CD8-positive, alpha-beta T cell (primary cell): ENCODE measurements at regions of chr22 and their contacts with region 1.

Region 1: GRCh38 chr22:31211862-31212730 is at the start of gene LIMK2:
- DNase-seq: peak; percentile 93 to 99 (median 97)
- ATAC-seq: peak; percentile 99
- H3K4me3 ChIP-seq: peak within 1 kb of the TSS; percentile 87 to 99
- H3K4me3 Mint-ChIP-seq: peak within 1 kb of the TSS; percentile 88
- H3K27ac ChIP-seq: peak within 1 kb of the TSS; percentile 50 to 80
- H3K27ac Mint-ChIP-seq: peak within 1 kb of the TSS; percentile 92
- H3K4me1 ChIP-seq: peaks cover 30% of the 10 kb centered on the region
- H3K4me1 Mint-ChIP-seq: peaks cover 45% of the 10 kb centered on the region
- H3K27me3 ChIP-seq: no peaks in the 10 kb centered on the region
- H3K27me3 Mint-ChIP-seq: no peaks in the 10 kb centered on the region
- CTCF ChIP-seq: peak; percentile 72
- total RNA-seq, gene LIMK2: 8.4 to 9.1 TPM

Region 2: DNA sequence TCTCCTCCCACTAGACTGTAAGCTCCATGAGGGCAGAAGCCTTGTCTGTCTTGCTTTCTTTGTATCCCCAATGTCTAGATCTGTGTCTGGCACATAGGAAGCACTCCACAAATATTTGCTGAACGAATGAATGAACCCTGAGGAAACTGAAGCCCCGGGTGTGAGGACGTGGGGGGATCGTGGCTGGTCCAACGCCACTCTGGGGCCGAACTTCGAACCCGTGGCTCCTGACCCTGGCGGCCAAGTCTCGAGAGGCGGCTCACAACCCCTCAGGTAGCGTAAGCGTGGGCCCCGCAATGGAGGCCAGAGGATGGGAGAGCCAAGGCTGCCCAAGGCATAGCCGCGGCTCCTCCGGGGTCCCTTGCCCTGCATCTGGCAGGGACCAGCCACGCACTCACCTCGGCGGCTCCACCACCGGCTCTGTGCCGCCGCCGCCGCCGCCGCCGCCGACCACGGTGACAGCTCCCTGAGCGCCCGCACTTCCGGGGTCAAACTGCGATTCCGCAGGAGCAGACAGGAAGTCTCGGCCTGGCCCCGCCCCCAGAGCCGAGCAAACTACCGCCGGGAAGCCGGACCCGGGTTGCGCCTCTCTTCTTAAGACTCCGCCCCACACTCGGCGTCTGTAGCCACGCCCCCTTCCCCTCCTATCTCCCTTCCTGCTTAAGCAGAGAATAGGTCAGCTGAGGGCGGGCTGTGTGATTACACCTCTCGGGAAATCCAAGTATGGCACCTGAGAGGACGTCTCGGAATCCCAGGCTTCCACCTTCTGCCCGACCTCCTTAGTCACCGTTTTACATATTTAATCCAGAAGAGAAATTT is 1374.1 kb before region 1 on chr22 and contains the start of gene ASCC2:
- CTCF ChIA-PET with region 1: no interaction called
- POLR2A ChIA-PET with region 1: no interaction called
- intact Hi-C with region 1: loop called in 1 of 2 experiments (anchors 10 kb)
- DNase-seq: peak; percentile 97 to 100 (median 99)
- ATAC-seq: peak; percentile 98
- H3K4me3 ChIP-seq: peak within 1 kb of the TSS; percentile 76 to 85
- H3K4me3 Mint-ChIP-seq: peak within 1 kb of the TSS; percentile 92
- H3K27ac ChIP-seq: peak within 1 kb of the TSS; percentile 55 to 85
- H3K27ac Mint-ChIP-seq: peak within 1 kb of the TSS; percentile 97
- H3K4me1 ChIP-seq: peaks cover 15% of the 10 kb centered on the region
- H3K4me1 Mint-ChIP-seq: peaks cover 43% of the 10 kb centered on the region
- H3K27me3 ChIP-seq: no peaks in the 10 kb centered on the region
- H3K27me3 Mint-ChIP-seq: no peaks in the 10 kb centered on the region
- CTCF ChIP-seq: no peak
- total RNA-seq, gene ASCC2: 66.2 to 76.5 TPM

Region 3: DNA sequence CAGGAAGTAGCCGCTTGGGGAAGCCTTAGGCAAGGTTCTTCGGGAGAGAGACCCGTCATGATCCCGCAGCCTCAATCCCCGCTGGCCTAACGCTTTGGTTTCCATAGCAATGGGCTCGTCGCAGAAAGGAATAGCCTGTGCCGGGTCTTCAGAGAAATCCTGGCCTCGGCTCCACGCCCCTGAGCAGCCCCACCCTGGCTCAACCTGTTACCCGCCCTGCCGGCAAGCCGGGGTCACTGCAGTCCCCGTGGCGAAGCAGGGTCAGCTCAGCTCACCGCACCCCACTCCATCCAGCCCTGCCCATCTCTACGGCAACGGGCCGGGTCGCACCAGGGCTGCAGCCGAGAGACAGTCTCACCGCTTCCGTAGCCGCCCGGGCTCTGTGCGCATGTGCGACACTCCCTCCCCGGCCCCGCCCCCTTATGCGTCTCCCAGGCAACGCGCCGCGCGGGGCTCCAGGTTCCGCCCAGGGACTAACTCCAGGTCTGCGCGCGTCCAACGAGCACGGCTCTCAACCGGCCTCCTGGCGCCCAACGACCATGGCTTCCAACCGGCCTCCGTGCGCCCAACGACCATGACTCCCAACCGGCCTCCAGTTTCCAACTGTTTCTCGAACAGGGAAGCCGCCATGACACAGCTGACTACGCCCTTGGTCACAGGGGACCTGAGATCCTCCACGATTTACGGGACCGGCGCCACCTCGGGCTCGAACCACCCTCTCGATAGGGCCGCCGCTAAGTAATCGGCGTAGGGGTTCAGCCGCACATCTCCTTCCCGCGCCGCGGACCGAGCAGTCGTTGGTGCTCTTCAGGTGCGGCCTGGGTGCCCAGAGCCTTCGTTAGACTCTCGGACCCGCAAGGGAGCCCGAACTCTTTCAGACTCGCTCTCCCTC is 544.4 kb before region 1 on chr22 and contains the start of gene DUSP18:
- CTCF ChIA-PET with region 1: no interaction called
- POLR2A ChIA-PET with region 1: no interaction called
- intact Hi-C with region 1: no loop called
- DNase-seq: peak; percentile 88 to 98 (median 95)
- ATAC-seq: peak; percentile 90
- H3K4me3 ChIP-seq: peak within 1 kb of the TSS; percentile 73 to 87
- H3K4me3 Mint-ChIP-seq: peak within 1 kb of the TSS; percentile 96
- H3K27ac ChIP-seq: peak within 1 kb of the TSS; percentile 54 to 72
- H3K27ac Mint-ChIP-seq: peak within 1 kb of the TSS; percentile 94
- H3K4me1 ChIP-seq: peaks cover 11% of the 10 kb centered on the region
- H3K4me1 Mint-ChIP-seq: peaks cover 18% of the 10 kb centered on the region
- H3K27me3 ChIP-seq: no peaks in the 10 kb centered on the region
- H3K27me3 Mint-ChIP-seq: no peaks in the 10 kb centered on the region
- CTCF ChIP-seq: no peak
- total RNA-seq, gene DUSP18: 3.4 to 4.5 TPM

Region 4: DNA sequence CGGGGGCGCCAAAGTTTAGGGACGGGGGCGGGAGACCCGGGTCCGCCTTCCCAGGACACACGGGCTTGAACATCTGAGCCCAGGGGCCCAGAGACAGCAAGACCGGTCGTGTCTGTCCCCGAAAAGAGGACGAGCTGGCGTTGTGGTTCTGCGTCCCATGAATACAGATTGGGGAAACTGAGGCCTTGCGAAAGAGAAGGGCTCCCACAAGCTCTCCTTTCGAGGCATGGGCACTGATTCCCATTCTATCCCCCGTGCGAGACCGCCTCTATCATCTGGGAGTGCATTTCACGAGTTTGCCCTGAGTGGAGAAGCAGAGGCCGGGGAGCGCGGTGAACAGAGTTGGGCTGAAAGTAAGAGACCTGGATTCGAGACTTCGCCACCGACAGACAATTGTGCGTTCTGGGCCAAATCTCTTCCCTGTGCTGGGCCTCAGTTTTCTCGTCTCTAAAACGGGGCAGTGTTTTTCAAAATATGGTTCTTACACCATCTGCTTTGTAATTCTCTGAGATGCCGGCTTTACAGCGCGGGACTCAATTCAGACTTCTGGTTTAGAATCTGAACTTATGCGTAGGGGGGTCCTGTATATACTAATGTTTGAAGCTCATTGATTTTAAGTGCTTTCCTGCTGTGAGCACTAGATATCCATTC is 51.6 kb before region 1 on chr22:
- CTCF ChIA-PET with region 1: interaction called, 12 read pairs
- POLR2A ChIA-PET with region 1: interaction called, 9 read pairs
- intact Hi-C with region 1: loop called (anchors 1 kb)
- DNase-seq: peak in 6 of 9 experiments; percentile 11 to 55 (median 28)
- ATAC-seq: peak; percentile 34
- H3K4me3 ChIP-seq: peak overlapping the region; percentile 78 to 86
- H3K4me3 Mint-ChIP-seq: peak overlapping the region; percentile 100
- H3K27ac ChIP-seq: peak overlapping the region; percentile 72 to 90
- H3K27ac Mint-ChIP-seq: peak overlapping the region; percentile 98
- H3K4me1 ChIP-seq: peaks cover 26% of the 10 kb centered on the region
- H3K4me1 Mint-ChIP-seq: peaks cover 38% of the 10 kb centered on the region
- H3K27me3 ChIP-seq: no peaks in the 10 kb centered on the region
- H3K27me3 Mint-ChIP-seq: no peaks in the 10 kb centered on the region
- CTCF ChIP-seq: no peak

Region 5: GRCh38 chr22:31179356-31179755 is 32.7 kb before region 1 on chr22:
- CTCF ChIA-PET with region 1: no interaction called
- POLR2A ChIA-PET with region 1: no interaction called
- intact Hi-C with region 1: no loop called
- DNase-seq: no peak
- ATAC-seq: no peak
- H3K4me3 ChIP-seq: no peak overlapping the region
- H3K4me3 Mint-ChIP-seq: no peak overlapping the region
- H3K27ac ChIP-seq: no peak overlapping the region
- H3K27ac Mint-ChIP-seq: no peak overlapping the region
- H3K4me1 ChIP-seq: no peaks in the 10 kb centered on the region
- H3K4me1 Mint-ChIP-seq: peaks cover 6% of the 10 kb centered on the region
- H3K27me3 ChIP-seq: no peaks in the 10 kb centered on the region
- H3K27me3 Mint-ChIP-seq: no peaks in the 10 kb centered on the region
- CTCF ChIP-seq: no peak

Region 6: DNA sequence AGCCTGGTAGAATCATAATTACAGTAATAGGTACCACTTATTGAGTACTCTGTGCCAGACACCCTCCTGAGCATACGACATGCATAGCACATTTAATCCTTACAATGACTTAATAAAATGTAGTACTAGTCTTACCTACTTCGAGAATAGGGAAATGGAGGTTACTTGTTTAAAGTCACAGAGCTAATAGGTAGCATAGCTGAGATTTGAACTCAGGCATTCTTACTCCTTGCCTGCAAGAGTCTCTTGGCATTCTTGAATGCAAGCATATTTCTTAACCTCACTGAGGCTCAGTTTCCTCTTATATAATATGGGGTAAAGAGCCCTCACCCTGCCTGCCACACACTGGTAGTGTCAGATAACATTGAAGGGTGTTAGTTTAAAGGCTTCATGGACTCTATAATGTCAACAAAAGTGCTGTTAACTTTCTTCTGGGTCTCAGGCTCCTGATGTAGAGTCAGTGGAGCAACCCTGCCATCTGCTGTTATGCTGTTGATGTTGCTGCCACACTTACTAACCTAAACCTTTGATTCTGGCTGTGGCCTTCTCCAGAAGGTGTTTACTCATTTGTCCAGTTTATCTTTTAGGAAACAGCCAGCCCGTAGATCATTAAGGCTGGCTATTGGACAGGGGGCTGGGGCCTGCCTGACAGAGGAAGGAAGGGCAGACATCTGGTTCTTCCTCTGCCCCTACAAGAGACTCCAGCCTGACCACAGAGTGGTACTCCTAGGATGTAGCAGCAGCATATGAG is 18.9 kb after region 1 on chr22:
- CTCF ChIA-PET with region 1: interaction called, 98 read pairs
- POLR2A ChIA-PET with region 1: interaction called, 10 read pairs
- intact Hi-C with region 1: loop called (anchors 1 kb)
- DNase-seq: peak; percentile 16 to 80 (median 56)
- ATAC-seq: peak; percentile 87
- H3K4me3 ChIP-seq: no peak overlapping the region
- H3K4me3 Mint-ChIP-seq: no peak overlapping the region
- H3K27ac ChIP-seq: peak overlapping the region in 1 of 2 experiments; percentile 40
- H3K27ac Mint-ChIP-seq: peak overlapping the region; percentile 92
- H3K4me1 ChIP-seq: peaks cover 25% of the 10 kb centered on the region
- H3K4me1 Mint-ChIP-seq: peaks cover 32% of the 10 kb centered on the region
- H3K27me3 ChIP-seq: no peaks in the 10 kb centered on the region
- H3K27me3 Mint-ChIP-seq: no peaks in the 10 kb centered on the region
- CTCF ChIP-seq: peak; percentile 69

Region 7: GRCh38 chr22:31272522-31273446 is 60.7 kb after region 1 on chr22:
- CTCF ChIA-PET with region 1: interaction called, 62 read pairs
- POLR2A ChIA-PET with region 1: interaction called, 20 read pairs
- intact Hi-C with region 1: loop called (anchors 1 to 2 kb)
- DNase-seq: peak in 8 of 9 experiments; percentile 44 to 76 (median 64)
- ATAC-seq: peak; percentile 76
- H3K4me3 ChIP-seq: no peak overlapping the region
- H3K4me3 Mint-ChIP-seq: no peak overlapping the region
- H3K27ac ChIP-seq: no peak overlapping the region
- H3K27ac Mint-ChIP-seq: peak overlapping the region; percentile 91
- H3K4me1 ChIP-seq: peaks cover 61% of the 10 kb centered on the region
- H3K4me1 Mint-ChIP-seq: peaks cover 63% of the 10 kb centered on the region
- H3K27me3 ChIP-seq: no peaks in the 10 kb centered on the region
- H3K27me3 Mint-ChIP-seq: no peaks in the 10 kb centered on the region
- CTCF ChIP-seq: peak; percentile 63

Region 8: GRCh38 chr22:31313366-31314147 is 101.5 kb after region 1 on chr22:
- CTCF ChIA-PET with region 1: interaction called, 30 read pairs
- POLR2A ChIA-PET with region 1: interaction called, 8 read pairs
- intact Hi-C with region 1: loop called (anchors 1 kb)
- DNase-seq: peak; percentile 37 to 82 (median 68)
- ATAC-seq: peak; percentile 84
- H3K4me3 ChIP-seq: no peak overlapping the region
- H3K4me3 Mint-ChIP-seq: no peak overlapping the region
- H3K27ac ChIP-seq: no peak overlapping the region
- H3K27ac Mint-ChIP-seq: no peak overlapping the region
- H3K4me1 ChIP-seq: peaks cover 13% of the 10 kb centered on the region
- H3K4me1 Mint-ChIP-seq: peaks cover 9% of the 10 kb centered on the region
- H3K27me3 ChIP-seq: no peaks in the 10 kb centered on the region
- H3K27me3 Mint-ChIP-seq: no peaks in the 10 kb centered on the region
- CTCF ChIP-seq: peak; percentile 82

Region 9: GRCh38 chr22:31630331-31631329 is 418.5 kb after region 1 on chr22:
- CTCF ChIA-PET with region 1: no interaction called
- POLR2A ChIA-PET with region 1: no interaction called
- intact Hi-C with region 1: loop called in 1 of 2 experiments (anchors 2 kb)
- DNase-seq: peak; percentile 69 to 94 (median 87)
- ATAC-seq: peak; percentile 92
- H3K4me3 ChIP-seq: peak overlapping the region; percentile 77 to 79
- H3K4me3 Mint-ChIP-seq: peak overlapping the region; percentile 90
- H3K27ac ChIP-seq: peak overlapping the region; percentile 85 to 98
- H3K27ac Mint-ChIP-seq: peak overlapping the region; percentile 94
- H3K4me1 ChIP-seq: peaks cover 40% of the 10 kb centered on the region
- H3K4me1 Mint-ChIP-seq: peaks cover 51% of the 10 kb centered on the region
- H3K27me3 ChIP-seq: no peaks in the 10 kb centered on the region
- H3K27me3 Mint-ChIP-seq: no peaks in the 10 kb centered on the region
- CTCF ChIP-seq: no peak